MCF 10A (cell line): ENCODE measurements at regions of chr1 and their contacts with region 1.

Region 1: DNA sequence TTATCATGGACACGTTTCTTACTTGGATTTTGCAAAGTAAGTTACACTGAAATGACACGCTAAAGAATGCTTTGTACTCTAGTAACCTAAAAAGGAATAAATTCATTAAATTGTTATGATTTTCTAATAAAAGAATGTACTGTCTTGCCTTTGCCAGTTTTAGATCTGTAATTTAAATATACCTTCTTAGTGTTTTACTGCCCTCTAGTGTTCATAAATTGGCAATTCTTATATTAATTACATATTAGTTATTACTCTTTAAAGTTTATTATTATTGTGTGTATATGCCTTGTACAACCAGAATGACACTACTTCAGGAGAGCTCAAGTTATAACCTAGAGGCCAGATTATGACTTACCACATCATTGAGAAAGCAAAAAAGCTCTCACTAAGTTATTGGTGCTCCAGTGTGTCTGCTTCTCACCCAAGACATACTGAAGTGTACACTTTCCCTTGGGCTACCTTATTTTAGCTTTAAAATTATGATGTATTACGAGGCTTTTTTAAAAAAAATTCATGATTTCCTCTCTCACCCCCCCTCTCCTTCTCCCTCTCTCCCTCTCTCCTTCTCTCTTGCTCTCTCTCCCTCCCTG is 169.9 kb downstream of the HS2ST1 start:
- DNase-seq: peak; percentile 35
- H3K4me3 Mint-ChIP-seq: no peak overlapping the region
- H3K27ac Mint-ChIP-seq: peak overlapping the region; percentile 36
- H3K4me1 Mint-ChIP-seq: no peaks in the 10 kb centered on the region
- H3K27me3 Mint-ChIP-seq: no peaks in the 10 kb centered on the region
- CTCF ChIP-seq: peak; percentile 41

Region 2: DNA sequence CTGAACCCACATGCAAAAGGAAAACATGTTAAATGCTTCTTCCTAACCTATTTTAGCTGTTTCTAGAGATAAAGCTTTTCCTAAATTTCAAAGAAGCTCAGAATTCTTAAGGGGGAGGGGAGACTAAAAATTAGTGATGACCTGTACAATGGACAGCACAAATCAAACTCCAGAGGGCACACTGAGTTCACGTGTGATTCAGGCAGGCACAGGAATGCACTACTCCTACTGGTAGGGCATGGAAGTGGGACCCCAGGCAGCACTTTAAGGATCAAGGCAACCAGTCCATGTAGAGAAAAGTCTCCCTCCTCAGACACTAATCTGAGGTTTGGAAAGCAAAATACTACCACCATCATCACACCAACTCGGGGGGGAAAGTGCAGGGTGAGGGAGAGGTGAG is 568.7 kb before region 1 on chr1:
- CTCF ChIA-PET with region 1: no interaction called
- POLR2A ChIA-PET with region 1: no interaction called
- intact Hi-C with region 1: loop called (anchors 5 kb)
- DNase-seq: peak; percentile 64
- H3K4me3 Mint-ChIP-seq: no peak overlapping the region
- H3K27ac Mint-ChIP-seq: no peak overlapping the region
- H3K4me1 Mint-ChIP-seq: peaks cover 9% of the 10 kb centered on the region
- H3K27me3 Mint-ChIP-seq: no peaks in the 10 kb centered on the region
- CTCF ChIP-seq: peak; percentile 39

Region 3: GRCh38 chr1:86666368-86666767 is 418.0 kb before region 1 on chr1:
- CTCF ChIA-PET with region 1: no interaction called
- POLR2A ChIA-PET with region 1: no interaction called
- intact Hi-C with region 1: no loop called
- DNase-seq: no peak
- H3K4me3 Mint-ChIP-seq: no peak overlapping the region
- H3K27ac Mint-ChIP-seq: no peak overlapping the region
- H3K4me1 Mint-ChIP-seq: no peaks in the 10 kb centered on the region
- H3K27me3 Mint-ChIP-seq: no peaks in the 10 kb centered on the region
- CTCF ChIP-seq: no peak

Region 4: GRCh38 chr1:86774305-86775295 is 309.7 kb before region 1 on chr1:
- CTCF ChIA-PET with region 1: interaction called, 28 read pairs
- POLR2A ChIA-PET with region 1: no interaction called
- intact Hi-C with region 1: no loop called
- DNase-seq: peak; percentile 93
- H3K4me3 Mint-ChIP-seq: peak overlapping the region; percentile 64
- H3K27ac Mint-ChIP-seq: peak overlapping the region; percentile 89
- H3K4me1 Mint-ChIP-seq: peaks cover 48% of the 10 kb centered on the region
- H3K27me3 Mint-ChIP-seq: no peaks in the 10 kb centered on the region
- CTCF ChIP-seq: no peak

Region 5: DNA sequence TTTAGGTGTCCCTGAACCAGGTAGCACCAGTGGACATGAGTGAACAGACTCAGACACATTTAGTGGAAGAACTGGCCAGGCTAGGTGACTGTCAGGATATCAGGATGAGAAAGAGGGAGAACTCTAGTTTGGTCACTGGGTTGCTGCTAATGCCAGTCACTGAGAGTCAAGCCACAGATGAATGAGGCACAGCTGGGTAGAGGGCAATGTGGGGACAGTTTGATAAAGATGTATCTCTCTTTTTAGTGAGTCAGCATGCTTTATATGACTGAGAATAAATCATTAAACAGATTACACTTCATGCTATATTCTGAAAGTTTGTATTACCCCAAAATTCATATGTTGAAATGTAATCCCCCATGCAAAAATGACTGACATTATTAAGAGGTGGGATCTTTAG is 257.5 kb before region 1 on chr1:
- CTCF ChIA-PET with region 1: interaction called, 17 read pairs
- POLR2A ChIA-PET with region 1: no interaction called
- intact Hi-C with region 1: no loop called
- DNase-seq: no peak
- H3K4me3 Mint-ChIP-seq: no peak overlapping the region
- H3K27ac Mint-ChIP-seq: no peak overlapping the region
- H3K4me1 Mint-ChIP-seq: no peaks in the 10 kb centered on the region
- H3K27me3 Mint-ChIP-seq: no peaks in the 10 kb centered on the region
- CTCF ChIP-seq: no peak

Region 6: GRCh38 chr1:86833461-86834215 is 250.7 kb before region 1 on chr1:
- CTCF ChIA-PET with region 1: interaction called, 17 read pairs
- POLR2A ChIA-PET with region 1: interaction called, 5 read pairs
- intact Hi-C with region 1: loop called (anchors 1 kb)
- DNase-seq: peak; percentile 91
- H3K4me3 Mint-ChIP-seq: no peak overlapping the region
- H3K27ac Mint-ChIP-seq: no peak overlapping the region
- H3K4me1 Mint-ChIP-seq: peaks cover 16% of the 10 kb centered on the region
- H3K27me3 Mint-ChIP-seq: no peaks in the 10 kb centered on the region
- CTCF ChIP-seq: peak; percentile 51

Region 7: GRCh38 chr1:86965012-86965826 is 119.1 kb before region 1 on chr1:
- CTCF ChIA-PET with region 1: interaction called, 11 read pairs
- POLR2A ChIA-PET with region 1: no interaction called
- intact Hi-C with region 1: loop called (anchors 10 kb)
- DNase-seq: peak; percentile 48
- H3K4me3 Mint-ChIP-seq: no peak overlapping the region
- H3K27ac Mint-ChIP-seq: no peak overlapping the region
- H3K4me1 Mint-ChIP-seq: no peaks in the 10 kb centered on the region
- H3K27me3 Mint-ChIP-seq: no peaks in the 10 kb centered on the region
- CTCF ChIP-seq: peak; percentile 74

Region 8: GRCh38 chr1:87074001-87074795 is 10.1 kb before region 1 on chr1:
- CTCF ChIA-PET with region 1: interaction called, 14 read pairs
- POLR2A ChIA-PET with region 1: interaction called, 4 read pairs
- intact Hi-C with region 1: no loop called
- DNase-seq: no peak
- H3K4me3 Mint-ChIP-seq: no peak overlapping the region
- H3K27ac Mint-ChIP-seq: no peak overlapping the region
- H3K4me1 Mint-ChIP-seq: peaks cover 5% of the 10 kb centered on the region
- H3K27me3 Mint-ChIP-seq: no peaks in the 10 kb centered on the region
- CTCF ChIP-seq: no peak